ENCODE measurements at regions of chr11 and their contacts with region 1.

Region 1: DNA sequence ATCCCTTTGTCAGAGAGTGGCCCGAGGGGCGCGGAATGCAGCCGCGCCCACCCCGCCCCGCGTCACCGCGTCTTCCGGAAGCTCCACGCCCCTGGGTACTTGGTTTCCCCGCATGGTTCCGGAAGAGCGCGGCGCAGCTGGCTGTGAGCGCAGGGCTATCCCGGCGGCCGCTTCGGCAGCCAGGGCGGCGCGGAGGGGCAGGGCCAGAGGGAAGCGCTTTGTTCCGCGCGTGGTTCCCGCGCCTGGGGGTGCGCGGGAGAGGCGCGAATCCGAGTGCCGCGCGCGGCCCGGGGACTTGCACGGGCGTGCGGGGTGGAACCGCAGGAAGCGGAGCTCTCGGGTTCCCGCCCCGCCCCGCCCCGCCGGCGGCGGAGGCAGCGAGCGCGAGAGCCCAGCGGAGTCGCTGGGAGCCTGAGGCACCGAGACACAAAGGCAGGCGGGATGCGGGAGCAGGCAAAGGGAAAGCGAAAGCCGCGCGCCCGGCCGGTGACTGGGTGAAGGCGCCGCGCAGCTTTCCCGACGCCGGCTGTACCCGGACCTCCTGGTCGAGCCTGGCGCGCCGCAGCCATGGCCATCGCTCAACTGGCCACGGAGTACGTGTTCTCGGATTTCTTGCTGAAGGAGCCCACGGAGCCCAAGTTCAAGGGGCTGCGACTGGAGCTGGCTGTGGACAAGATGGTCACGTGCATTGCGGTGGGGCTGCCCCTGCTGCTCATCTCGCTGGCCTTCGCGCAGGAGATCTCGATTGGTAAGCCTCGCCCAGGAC is at the start of gene PANX1:
- DNase-seq: peak in 1 of 2 experiments; percentile 85
- H3K4me3 ChIP-seq: peak within 1 kb of the TSS; percentile 77 to 96 (median 86)
- H3K27ac ChIP-seq: peak within 1 kb of the TSS; percentile 90
- H3K4me1 ChIP-seq: peaks cover 12 to 34% (median 19%) of the 10 kb centered on the region in 4 experiments
- H3K27me3 ChIP-seq: no peaks in the 10 kb centered on the region
- CTCF ChIP-seq: no peak
- EP300 ChIP-seq: peak in 1 of 2 experiments; percentile 40; a peak in 1 of 3 replicates
- POLR2A ChIP-seq: peak; percentile 66 to 68; a peak in 2 of 3 replicates
- RAD21 ChIP-seq: no peak
- total RNA-seq, gene PANX1: 34.5 and 35.2 TPM in 2 replicates

Region 2: DNA sequence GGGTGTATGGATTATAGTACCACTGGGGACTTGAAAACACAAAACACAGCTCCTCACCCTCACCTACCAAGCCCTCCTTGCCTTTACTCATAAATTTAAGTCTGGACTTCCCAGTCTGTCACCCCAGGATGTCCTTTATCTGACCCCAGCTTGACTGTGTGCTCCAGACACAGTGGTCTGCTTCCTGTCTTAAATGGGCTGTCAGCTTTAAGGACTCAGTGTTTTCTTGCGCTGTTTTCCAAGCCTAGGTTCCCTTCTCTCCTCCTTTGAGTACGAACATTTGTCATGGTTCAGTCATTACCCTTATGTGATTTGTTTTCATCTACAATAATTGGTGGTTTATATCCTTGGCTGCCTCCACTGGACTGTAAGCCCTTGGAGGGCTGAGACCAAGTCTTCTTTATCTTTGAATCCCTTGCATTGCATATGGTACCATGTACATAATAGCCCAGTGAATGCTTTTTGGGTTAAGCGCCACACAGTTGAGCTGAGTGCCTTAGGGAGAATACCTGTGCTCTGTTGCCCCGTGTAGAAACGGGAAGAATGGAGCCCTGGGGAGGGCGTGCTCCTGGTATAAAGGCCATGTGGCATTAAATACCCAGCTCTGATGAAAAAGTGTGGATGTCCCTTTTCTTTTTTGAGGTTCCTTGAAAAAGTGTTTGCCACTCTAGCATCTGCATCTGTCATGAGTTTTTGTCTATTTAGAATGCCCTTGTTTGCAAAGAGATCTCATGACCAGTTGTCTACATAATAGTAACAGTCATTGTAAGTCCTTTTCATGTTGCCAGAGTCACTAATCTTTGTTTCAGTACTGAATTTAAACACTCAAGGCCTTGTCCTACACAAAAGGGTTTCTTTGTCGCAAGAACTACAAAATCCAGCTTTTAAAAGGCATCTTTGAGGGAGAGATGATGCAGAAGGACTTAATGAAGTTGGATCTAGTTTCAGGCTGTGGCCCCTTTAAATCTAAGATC is 13.7 kb after region 1 on chr11:
- CTCF ChIA-PET with region 1: interaction called, 4 read pairs
- POLR2A ChIA-PET with region 1: interaction called, 10 read pairs
- DNase-seq: no peak
- H3K4me3 ChIP-seq: no peak overlapping the region
- H3K27ac ChIP-seq: no peak overlapping the region
- H3K4me1 ChIP-seq: peaks cover 5 to 30% (median 23%) of the 10 kb centered on the region in 4 experiments
- H3K27me3 ChIP-seq: no peaks in the 10 kb centered on the region
- CTCF ChIP-seq: no peak
- EP300 ChIP-seq: no peak
- POLR2A ChIP-seq: no peak
- RAD21 ChIP-seq: no peak

Region 3: DNA sequence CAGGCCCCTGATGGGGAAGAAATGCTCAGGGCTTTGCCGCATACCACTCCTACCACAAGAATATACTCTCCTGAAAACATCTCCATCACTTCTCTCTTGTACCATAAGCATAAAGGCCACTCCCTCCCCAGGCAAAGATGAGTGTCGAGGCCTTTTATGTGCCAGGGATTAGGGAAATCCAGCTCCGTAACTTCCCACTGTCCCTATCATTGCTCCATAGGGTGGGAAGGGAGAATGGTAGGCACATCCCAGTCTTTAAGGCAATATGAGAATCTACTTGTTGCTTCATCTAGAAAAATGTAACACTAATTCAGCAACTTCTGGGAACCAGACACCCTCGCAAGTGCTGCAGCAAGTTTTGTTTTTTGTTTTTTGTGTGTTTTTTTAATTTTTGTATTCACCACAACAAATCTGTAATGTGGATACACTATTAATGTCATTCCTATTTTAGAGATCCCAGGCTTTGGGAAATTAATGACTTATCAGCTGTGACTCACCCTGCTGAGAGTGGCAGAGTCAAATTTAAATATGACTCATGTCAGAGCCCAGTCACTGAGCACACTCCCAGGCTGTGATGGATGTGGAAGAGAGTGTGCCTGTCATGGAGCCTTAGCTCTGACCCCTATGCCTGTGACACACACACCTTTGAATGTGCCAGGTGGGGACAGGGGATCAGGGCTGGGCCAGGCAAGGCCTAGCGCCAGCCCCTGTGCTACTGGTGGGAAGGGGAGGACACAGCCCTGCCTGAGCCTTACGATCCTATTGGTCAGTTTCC is 23.2 kb after region 1 on chr11:
- CTCF ChIA-PET with region 1: interaction called, 6 read pairs
- POLR2A ChIA-PET with region 1: interaction called, 17 read pairs
- DNase-seq: no peak
- H3K4me3 ChIP-seq: no peak overlapping the region
- H3K27ac ChIP-seq: no peak overlapping the region
- H3K4me1 ChIP-seq: peaks cover 10 to 22% (median 16%) of the 10 kb centered on the region in 4 experiments
- H3K27me3 ChIP-seq: no peaks in the 10 kb centered on the region
- CTCF ChIP-seq: no peak
- EP300 ChIP-seq: no peak
- POLR2A ChIP-seq: no peak
- RAD21 ChIP-seq: no peak